Activated T-helper 2 cell treated with anti-CD3 and anti-CD28 coated beads, Interferon-gamma antibody, Interleukin-2, Interleukin-4, amounts not matched to agents 10 μg/mL and 5 μg/mL and 100 μg/mL, durations not matched to agents 14 hours and 24 hours and 36 hours (primary cell): ENCODE measurements at regions of chr6 and their contacts with region 1.

Region 1: GRCh38 chr6:14046476-14047068 is 71.0 kb upstream of the CD83 start:
- DNase-seq: peak; percentile 31
- H3K4me3 Mint-ChIP-seq: no peak overlapping the region
- H3K27ac Mint-ChIP-seq: no peak overlapping the region
- H3K4me1 Mint-ChIP-seq: no peaks in the 10 kb centered on the region
- H3K27me3 Mint-ChIP-seq: peaks cover 48% of the 10 kb centered on the region

Region 2: DNA sequence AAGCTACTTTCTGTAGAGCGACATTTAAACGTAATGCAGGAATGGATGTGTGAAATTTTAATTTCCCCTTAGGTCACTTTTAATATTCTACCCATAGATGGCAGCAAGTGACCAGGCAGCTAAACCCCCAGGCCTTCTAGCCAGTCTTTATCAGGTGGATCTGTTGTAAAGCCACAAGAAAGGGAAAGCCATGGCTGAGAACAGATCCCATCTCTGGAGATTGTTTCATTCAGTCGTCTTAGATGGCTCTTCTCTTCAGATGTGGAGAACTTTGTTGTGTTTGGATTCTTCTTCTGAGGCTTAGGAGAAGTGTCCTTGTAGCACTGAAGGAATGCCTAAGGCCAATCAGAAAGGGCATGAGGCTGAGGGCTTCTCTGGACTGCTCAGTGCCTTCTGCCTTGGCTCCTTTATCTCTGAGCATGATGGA is 137.6 kb before region 1 on chr6:
- intact Hi-C with region 1: loop called (anchors 2 kb)
- DNase-seq: peak; percentile 20
- H3K4me3 Mint-ChIP-seq: no peak overlapping the region
- H3K27ac Mint-ChIP-seq: no peak overlapping the region
- H3K4me1 Mint-ChIP-seq: peaks cover 10% of the 10 kb centered on the region
- H3K27me3 Mint-ChIP-seq: peaks cover 70% of the 10 kb centered on the region

Region 3: DNA sequence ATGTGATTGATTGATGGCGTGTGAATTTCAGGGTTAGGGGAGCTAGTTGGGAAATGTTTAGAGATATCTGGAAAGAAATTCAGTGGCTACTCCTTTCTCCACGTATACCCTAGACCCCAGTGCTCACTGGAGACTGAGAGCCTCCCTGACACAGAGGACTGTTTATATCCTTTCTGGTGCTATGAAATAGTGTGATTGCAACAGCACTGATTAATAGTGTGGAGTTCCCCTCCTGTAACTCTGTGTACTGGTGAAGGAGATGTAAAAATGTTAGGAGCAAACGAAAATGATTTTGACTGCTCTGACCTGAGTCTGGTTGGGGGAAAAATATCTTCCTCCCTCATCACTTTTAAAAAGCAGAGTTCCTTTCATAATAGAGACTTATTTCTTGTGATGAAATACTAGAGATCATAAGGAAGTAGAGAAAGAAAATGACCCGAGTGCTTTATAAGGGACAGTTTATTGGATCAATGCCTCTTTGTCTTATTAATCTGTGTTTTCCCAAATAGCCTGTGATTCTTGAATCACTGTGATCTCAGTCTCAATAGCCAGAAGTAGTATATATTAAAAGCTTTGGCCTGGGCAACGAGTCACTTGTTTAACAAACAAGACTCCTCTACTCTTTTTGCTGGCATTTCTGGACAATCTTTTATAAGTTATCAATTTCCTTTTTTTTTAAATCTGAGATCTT is 29.5 kb before region 1 on chr6:
- intact Hi-C with region 1: no loop called
- DNase-seq: no peak
- H3K4me3 Mint-ChIP-seq: no peak overlapping the region
- H3K27ac Mint-ChIP-seq: no peak overlapping the region
- H3K4me1 Mint-ChIP-seq: no peaks in the 10 kb centered on the region
- H3K27me3 Mint-ChIP-seq: peaks cover 14% of the 10 kb centered on the region

Region 4: DNA sequence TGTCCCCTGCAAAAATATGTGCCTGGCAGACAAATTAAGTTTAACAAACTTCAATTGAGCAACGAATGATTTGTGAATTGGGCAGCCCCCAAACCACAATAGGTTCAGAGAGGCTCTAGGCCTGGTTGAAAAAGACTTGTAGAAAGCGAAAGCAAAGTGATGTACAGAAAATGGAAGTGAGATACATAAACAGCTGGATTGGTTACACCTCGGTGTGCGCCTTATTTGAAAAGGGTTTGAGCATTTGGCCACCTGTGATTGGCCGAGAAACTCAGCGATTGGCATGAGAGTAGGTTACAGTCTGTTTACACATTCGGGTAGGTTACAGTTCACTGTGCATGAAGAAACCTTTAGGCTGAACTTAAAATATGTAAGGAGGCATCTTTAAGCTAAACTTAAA is 207.9 kb after region 1 on chr6:
- intact Hi-C with region 1: no loop called
- DNase-seq: no peak
- H3K4me3 Mint-ChIP-seq: no peak overlapping the region
- H3K27ac Mint-ChIP-seq: no peak overlapping the region
- H3K4me1 Mint-ChIP-seq: peaks cover 9% of the 10 kb centered on the region
- H3K27me3 Mint-ChIP-seq: no peaks in the 10 kb centered on the region